ENCODE measurements at regions of chr13 and their contacts with region 1.

Region 1: GRCh38 chr13:97221989-97222700 is at the start of gene MBNL2:
- DNase-seq: peak; percentile 93
- H3K4me3 Mint-ChIP-seq: peak within 1 kb of the TSS; percentile 79
- H3K27ac Mint-ChIP-seq: peak within 1 kb of the TSS; percentile 87
- H3K4me1 Mint-ChIP-seq: peaks cover 33% of the 10 kb centered on the region
- H3K27me3 Mint-ChIP-seq: no peaks in the 10 kb centered on the region
- total RNA-seq, gene MBNL2: 16.8 to 18.8 TPM

Region 2: GRCh38 chr13:95676762-95677563 is 1545.2 kb before region 1 on chr13 and contains the start of gene DNAJC3:
- CTCF ChIA-PET with region 1: no interaction called
- intact Hi-C with region 1: loop called (anchors 10 kb)
- DNase-seq: peak; percentile 98
- H3K4me3 Mint-ChIP-seq: peak within 1 kb of the TSS; percentile 93
- H3K27ac Mint-ChIP-seq: peak within 1 kb of the TSS; percentile 86
- H3K4me1 Mint-ChIP-seq: peaks cover 53% of the 10 kb centered on the region
- H3K27me3 Mint-ChIP-seq: no peaks in the 10 kb centered on the region
- total RNA-seq, gene DNAJC3: 13.8 to 14.0 TPM

Region 3: DNA sequence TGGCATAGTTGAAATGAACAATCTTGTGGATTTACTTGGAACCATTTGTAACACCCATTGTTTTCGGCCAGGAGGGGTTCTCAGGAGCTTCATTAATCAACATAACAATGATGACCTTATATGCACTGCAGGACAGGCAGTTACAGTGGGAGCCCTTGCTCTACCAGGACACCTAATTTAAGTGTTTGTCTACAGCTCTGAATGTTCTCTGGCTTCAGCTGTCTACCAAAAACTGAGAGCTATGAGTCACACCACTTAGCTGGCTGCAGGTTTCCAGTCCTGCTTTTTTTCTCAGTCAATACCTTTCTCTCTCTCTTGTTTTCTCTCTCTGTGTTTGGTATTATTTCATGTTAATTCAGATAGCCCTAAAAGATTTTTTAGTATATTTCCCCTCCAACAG is 105.4 kb before region 1 on chr13:
- CTCF ChIA-PET with region 1: interaction called, 3 read pairs
- intact Hi-C with region 1: loop called (anchors 2 kb)
- DNase-seq: peak; percentile 14
- H3K4me3 Mint-ChIP-seq: no peak overlapping the region
- H3K27ac Mint-ChIP-seq: no peak overlapping the region
- H3K4me1 Mint-ChIP-seq: peaks cover 11% of the 10 kb centered on the region
- H3K27me3 Mint-ChIP-seq: peaks cover 36% of the 10 kb centered on the region

Region 4: GRCh38 chr13:97257800-97258799 is 36.0 kb after region 1 on chr13:
- CTCF ChIA-PET with region 1: interaction called, 3 read pairs
- intact Hi-C with region 1: loop called (anchors 1 kb)
- DNase-seq: no peak
- H3K4me3 Mint-ChIP-seq: no peak overlapping the region
- H3K27ac Mint-ChIP-seq: no peak overlapping the region
- H3K4me1 Mint-ChIP-seq: peaks cover 74% of the 10 kb centered on the region
- H3K27me3 Mint-ChIP-seq: no peaks in the 10 kb centered on the region

Region 5: GRCh38 chr13:97307882-97308624 is 85.9 kb after region 1 on chr13:
- CTCF ChIA-PET with region 1: no interaction called
- intact Hi-C with region 1: no loop called
- DNase-seq: no peak
- H3K4me3 Mint-ChIP-seq: no peak overlapping the region
- H3K27ac Mint-ChIP-seq: no peak overlapping the region
- H3K4me1 Mint-ChIP-seq: peaks cover 10% of the 10 kb centered on the region
- H3K27me3 Mint-ChIP-seq: no peaks in the 10 kb centered on the region

Region 6: DNA sequence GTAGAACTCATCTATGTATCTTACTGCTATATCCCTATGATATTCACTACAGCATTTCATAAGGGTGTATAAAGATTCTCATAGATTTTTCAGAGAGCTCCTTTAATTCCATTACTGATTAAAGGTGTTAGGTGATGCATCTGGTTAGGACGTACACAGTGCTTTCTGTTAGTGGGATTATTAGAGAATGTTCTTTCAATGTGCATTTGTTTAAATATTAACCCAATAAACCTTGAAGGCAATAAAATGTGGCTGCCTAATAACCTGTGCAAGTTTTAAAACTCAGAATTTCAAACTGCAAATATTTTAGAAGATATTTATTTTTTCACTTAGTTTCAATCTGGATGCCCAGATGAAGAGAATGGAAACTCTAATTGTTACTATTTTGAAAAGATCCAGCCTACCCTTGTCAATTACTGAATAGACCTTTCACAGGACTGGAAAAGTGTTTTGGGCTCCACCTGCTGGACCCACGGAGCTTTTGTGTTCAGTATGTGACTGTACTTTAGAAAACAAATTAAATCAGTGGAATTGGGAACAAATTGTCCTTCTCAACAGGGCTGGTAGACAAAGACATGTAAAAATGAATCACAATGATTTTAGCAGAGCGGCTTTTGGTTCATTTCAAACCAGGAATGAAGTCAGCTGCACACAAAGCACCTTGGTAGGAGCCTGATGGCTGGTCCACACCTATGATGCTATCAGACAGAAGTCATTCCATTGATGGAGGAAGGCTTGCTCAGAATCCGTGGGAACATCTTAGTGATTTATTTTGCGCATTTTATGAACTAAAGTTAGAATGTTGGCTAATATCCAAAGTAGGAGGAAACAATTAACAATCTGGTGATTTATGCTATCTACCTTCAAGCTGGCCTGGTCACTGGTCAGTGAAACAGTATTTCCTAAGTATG is 122.4 kb after region 1 on chr13:
- CTCF ChIA-PET with region 1: interaction called, 5 read pairs
- intact Hi-C with region 1: loop called (anchors 1 kb)
- DNase-seq: peak; percentile 72
- H3K4me3 Mint-ChIP-seq: no peak overlapping the region
- H3K27ac Mint-ChIP-seq: no peak overlapping the region
- H3K4me1 Mint-ChIP-seq: peaks cover 6% of the 10 kb centered on the region
- H3K27me3 Mint-ChIP-seq: no peaks in the 10 kb centered on the region

Region 7: DNA sequence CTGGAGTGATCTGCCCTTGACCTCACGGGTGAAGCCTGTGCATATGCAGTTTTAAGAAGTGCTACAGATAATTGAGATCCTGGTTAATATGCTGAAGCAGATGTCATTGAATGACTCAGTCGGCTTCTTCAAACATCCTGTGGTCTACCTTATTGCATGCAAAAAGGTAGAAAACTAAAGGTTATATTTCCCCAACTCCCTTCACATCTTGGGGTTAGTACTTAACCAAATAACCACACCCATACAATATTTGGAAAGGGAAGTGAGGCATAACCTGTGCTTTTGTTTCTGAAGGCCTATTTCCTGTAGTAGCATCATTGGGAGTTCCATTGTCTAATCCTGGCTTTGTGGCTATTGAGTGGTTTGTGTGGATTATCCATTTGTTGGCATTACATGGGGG is 270.1 kb after region 1 on chr13:
- CTCF ChIA-PET with region 1: no interaction called
- intact Hi-C with region 1: no loop called
- DNase-seq: no peak
- H3K4me3 Mint-ChIP-seq: no peak overlapping the region
- H3K27ac Mint-ChIP-seq: no peak overlapping the region
- H3K4me1 Mint-ChIP-seq: no peaks in the 10 kb centered on the region
- H3K27me3 Mint-ChIP-seq: no peaks in the 10 kb centered on the region

Region 8: DNA sequence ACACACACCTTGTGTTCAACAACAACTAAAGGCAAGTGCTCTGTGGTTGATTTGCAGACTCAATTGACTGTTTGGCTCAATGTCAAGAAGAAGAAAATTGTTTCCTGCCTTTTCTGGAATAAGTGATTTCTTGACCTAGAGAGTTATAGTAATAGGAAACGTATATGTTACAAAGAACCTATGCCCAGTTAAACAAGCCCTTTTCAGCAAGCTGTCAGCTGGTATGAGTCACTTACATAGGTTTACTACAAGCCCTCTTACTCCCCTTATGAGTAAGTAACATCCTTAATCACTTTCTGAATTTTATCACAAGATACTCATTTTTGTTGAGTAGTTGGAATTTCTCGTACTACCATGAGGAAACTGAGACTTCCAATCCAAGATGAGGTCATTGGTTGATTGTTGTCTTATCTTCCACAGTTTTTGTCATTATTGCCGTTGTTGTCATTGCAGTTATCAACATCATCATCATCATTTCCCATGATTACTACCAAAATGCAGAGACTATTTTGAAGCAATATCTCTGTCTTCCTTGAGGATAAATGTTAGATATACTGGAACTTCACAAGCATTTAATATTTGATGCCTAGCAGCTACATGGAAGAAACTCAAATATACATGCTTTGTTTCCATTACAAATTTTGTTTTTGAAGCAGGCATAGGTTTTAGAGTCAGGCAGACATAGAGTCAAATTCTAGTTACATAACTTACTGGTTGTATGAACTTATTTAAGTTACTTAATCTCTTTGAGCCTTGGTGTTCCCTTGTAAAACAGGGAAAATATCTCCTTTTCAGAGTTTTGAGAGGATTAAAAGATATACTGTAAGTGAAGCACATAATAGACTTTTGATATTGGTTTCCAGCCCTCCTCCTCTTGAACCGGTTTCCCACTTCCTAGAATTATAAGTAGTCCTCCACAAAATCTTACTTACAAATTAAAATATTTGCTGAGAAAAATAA is 317.8 kb after region 1 on chr13:
- CTCF ChIA-PET with region 1: no interaction called
- intact Hi-C with region 1: loop called (anchors 10 kb)
- DNase-seq: no peak
- H3K4me3 Mint-ChIP-seq: no peak overlapping the region
- H3K27ac Mint-ChIP-seq: no peak overlapping the region
- H3K4me1 Mint-ChIP-seq: peaks cover 4% of the 10 kb centered on the region
- H3K27me3 Mint-ChIP-seq: peaks cover 4% of the 10 kb centered on the region

Region 9: DNA sequence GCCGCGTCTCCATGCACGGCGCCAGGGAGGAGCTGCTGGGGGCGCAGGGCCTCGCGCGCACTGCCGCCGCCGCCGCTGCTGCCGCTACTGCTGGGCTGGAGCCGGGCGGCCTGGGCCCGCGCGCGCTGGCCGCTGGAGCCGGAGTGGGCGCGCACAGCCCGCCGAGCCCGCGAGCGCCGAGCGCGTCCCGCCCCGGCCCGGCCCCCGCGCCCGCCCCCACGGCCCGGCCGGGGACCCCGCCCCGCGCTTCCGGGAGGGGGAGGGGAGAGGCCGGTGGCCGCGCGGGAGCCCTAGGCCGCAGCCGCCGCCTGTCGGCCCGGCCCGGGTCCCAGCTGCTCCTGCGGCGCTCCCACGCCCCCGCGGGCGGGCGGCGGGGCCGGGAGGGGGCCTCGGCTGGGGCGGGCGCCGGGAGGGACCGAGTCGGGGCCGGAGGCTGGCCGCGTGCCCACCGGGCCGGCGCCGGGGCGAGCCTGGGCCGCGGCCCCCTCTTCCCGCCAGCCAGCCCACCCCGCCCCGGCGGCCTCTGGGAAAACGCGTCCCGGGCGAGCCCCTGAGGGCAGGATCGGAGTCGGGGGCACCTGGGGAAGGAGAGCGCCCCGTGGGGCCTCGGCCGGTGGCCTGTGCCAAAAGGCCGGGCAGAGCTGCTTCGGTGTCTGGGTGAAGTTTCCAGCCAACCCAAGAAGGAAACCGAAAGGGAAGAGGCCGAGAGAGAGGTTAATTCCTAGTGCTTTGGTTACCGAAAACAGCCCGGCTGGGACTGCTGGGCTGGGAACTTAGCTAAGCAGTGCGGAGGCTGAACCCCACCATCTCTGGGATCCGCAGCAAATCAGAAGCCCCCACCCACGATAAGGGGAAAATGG is 1355.0 kb after region 1 on chr13 and contains the start of gene STK24:
- CTCF ChIA-PET with region 1: no interaction called
- intact Hi-C with region 1: loop called (anchors 10 kb)
- DNase-seq: peak; percentile 46
- H3K4me3 Mint-ChIP-seq: peak within 1 kb of the TSS; percentile 84
- H3K27ac Mint-ChIP-seq: peak within 1 kb of the TSS; percentile 88
- H3K4me1 Mint-ChIP-seq: peaks cover 35% of the 10 kb centered on the region
- H3K27me3 Mint-ChIP-seq: no peaks in the 10 kb centered on the region
- total RNA-seq, gene STK24: 95.5 to 96.7 TPM